GM12878 (cell line): ENCODE measurements at regions of chr10 and their contacts with region 1.

Region 1: DNA sequence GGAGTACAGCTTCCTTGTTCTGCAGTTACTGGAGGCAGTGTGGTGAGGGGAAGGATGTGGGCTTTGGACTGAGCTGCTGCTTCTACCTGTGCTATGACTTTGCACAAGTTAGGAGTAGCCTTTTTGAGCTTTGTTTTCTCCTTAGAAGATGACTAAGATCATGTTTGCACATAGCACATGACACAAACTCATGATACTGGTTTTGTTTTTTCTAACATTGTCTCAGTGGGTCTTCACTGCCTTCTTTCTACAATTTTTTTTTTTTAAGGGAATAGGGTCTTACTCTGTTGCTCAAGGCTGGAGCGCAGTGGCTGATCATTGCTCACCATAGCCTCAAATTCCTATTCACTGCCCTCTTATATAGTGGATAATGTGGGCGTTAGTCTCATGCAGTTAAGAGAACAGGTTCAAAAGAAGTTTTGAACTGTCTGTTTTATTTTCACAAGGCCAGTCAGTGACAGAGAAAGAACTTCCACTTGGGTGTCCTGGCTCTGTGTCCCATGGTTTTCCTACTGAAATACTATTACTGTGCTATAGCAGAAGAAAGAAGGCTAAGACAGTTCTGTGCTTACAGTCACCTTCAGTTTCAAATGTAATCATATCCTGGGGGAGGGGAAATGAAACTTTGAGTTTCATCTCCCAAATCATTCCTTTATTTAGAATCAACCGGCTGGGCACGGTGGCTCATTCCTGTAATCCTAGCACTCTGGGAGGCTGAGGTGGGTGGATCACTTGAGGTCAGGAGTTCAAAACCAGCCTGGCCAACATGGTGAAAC is 72.0 kb downstream of the KAT6B start:
- DNase-seq: peak; percentile 67
- ATAC-seq: peak; percentile 80
- H3K4me3 ChIP-seq: no peak overlapping the region; the same call in 1 of the 2 replicates
- H3K27ac ChIP-seq: peak overlapping the region; percentile 87
- H3K4me1 ChIP-seq: peaks cover 42% of the 10 kb centered on the region
- H3K27me3 ChIP-seq: no peaks in the 10 kb centered on the region
- CTCF ChIP-seq: no peak
- EP300 ChIP-seq: no peak; a peak in 2 of 4 replicates
- POLR2A ChIP-seq: peak; percentile 48
- RAD21 ChIP-seq: no peak

Region 2: GRCh38 chr10:74262856-74263255 is 635.5 kb before region 1 on chr10:
- CTCF ChIA-PET with region 1: no interaction called
- POLR2A ChIA-PET with region 1: no interaction called
- RAD21 ChIA-PET with region 1: no interaction called
- SMC1A ChIA-PET with region 1: interaction called, 3 read pairs
- in situ Hi-C with region 1: no loop called
- intact Hi-C with region 1: loop called (anchors 10 kb)
- DNase-seq: no peak
- ATAC-seq: no peak
- H3K4me3 ChIP-seq: no peak overlapping the region
- H3K27ac ChIP-seq: no peak overlapping the region
- H3K4me1 ChIP-seq: no peaks in the 10 kb centered on the region
- H3K27me3 ChIP-seq: no peaks in the 10 kb centered on the region
- CTCF ChIP-seq: no peak
- EP300 ChIP-seq: no peak
- POLR2A ChIP-seq: no peak
- RAD21 ChIP-seq: no peak

Region 3: DNA sequence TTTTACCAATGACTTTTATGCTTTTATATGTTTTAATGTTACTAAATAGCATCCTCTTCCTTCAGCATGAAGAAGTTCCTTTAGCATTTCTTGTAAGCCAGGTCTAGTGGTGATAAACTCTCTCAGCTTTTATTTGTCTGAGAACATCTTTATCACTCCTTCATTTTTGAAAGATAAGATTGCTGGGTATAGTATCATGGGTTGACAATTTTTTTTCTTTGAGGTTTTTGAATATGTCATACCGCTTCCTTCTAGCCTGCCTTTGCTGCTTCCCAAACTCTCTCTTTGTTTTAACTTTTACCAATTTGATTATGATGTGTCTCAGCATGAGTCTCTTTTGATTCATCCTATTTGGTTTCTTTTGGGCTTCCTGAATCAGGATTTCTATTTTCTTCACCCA is 180.2 kb before region 1 on chr10:
- CTCF ChIA-PET with region 1: no interaction called
- POLR2A ChIA-PET with region 1: no interaction called
- RAD21 ChIA-PET with region 1: no interaction called
- SMC1A ChIA-PET with region 1: no interaction called
- in situ Hi-C with region 1: no loop called
- intact Hi-C with region 1: no loop called
- DNase-seq: no peak
- ATAC-seq: no peak
- H3K4me3 ChIP-seq: no peak overlapping the region
- H3K27ac ChIP-seq: no peak overlapping the region
- H3K4me1 ChIP-seq: no peaks in the 10 kb centered on the region
- H3K27me3 ChIP-seq: no peaks in the 10 kb centered on the region
- CTCF ChIP-seq: no peak
- EP300 ChIP-seq: no peak
- POLR2A ChIP-seq: no peak
- RAD21 ChIP-seq: no peak

Region 4: DNA sequence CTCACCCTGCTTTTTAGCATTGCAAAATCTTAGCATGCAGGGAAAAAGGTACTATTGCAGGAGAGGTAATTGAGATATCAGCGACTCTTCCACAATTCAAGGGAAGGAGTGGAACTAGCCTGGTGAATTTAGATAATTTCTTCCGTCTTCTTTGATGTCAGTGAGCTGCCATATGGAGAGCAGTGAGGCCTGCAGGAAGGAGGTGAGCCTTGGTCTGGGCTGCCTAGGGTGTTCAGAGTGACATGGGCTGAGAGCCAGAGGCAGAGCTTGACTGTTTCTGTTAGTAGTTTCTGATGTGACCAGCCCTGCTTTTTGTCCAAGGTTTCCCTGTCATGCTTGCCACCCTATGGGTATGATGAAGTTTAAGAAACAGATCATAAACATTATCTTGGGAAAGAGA is 43.4 kb before region 1 on chr10:
- CTCF ChIA-PET with region 1: interaction called, 4 read pairs
- POLR2A ChIA-PET with region 1: interaction called, 6 read pairs
- RAD21 ChIA-PET with region 1: interaction called, 6 read pairs
- SMC1A ChIA-PET with region 1: interaction called, 13 read pairs
- in situ Hi-C with region 1: no loop called
- intact Hi-C with region 1: no loop called
- DNase-seq: no peak
- ATAC-seq: peak; percentile 83
- H3K4me3 ChIP-seq: peak overlapping the region; percentile 22; the same call in 1 of the 2 replicates
- H3K27ac ChIP-seq: peak overlapping the region; percentile 82
- H3K4me1 ChIP-seq: peaks cover 19% of the 10 kb centered on the region
- H3K27me3 ChIP-seq: no peaks in the 10 kb centered on the region
- CTCF ChIP-seq: no peak
- EP300 ChIP-seq: no peak
- POLR2A ChIP-seq: 0 out of 2 replicates have a peak, but pooled peaks have one; percentile 20
- RAD21 ChIP-seq: no peak

Region 5: DNA sequence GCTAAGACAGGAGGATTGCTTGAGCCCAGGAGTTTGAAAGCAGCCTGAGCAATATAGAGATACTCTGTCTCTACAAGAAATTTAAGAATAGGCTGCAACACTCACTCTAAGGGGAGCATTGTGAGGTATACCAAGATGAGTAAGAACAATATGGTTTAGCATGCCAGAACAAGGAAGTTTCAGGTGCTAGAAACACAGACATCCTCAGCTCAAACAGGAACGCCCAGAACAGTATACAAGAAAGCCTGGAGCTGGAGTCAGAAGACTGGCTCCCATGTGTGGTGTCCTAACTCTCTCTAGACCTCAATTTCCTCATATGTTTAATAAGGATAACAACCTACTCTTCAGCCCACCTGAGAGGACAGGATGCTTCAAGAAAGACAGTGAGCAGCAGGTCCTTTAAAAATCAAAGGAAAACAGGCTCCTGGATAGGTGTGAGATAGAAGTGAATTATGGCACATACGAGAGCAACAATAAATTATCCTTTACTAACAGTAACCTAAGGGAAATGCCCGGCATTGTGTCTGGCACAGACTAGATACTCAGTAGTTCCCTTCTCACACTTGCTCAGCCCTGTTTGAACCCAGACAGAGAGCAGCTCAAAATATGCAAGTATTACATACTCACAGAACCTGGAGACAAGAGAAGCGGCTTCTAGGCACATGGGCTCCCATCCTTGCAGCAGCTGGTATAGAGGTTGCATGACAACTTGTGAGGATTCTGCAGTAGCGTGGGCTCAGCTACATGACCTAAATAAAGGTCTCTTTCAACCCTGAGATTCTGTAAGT is 26.6 kb before region 1 on chr10:
- CTCF ChIA-PET with region 1: interaction called, 5 read pairs
- POLR2A ChIA-PET with region 1: interaction called, 7 read pairs
- RAD21 ChIA-PET with region 1: interaction called, 6 read pairs
- SMC1A ChIA-PET with region 1: interaction called, 31 read pairs
- in situ Hi-C with region 1: no loop called
- intact Hi-C with region 1: no loop called
- DNase-seq: peak; percentile 72
- ATAC-seq: peak; percentile 96
- H3K4me3 ChIP-seq: peak overlapping the region; percentile 37; the same call in 1 of the 2 replicates
- H3K27ac ChIP-seq: peak overlapping the region; percentile 61
- H3K4me1 ChIP-seq: peaks cover 32% of the 10 kb centered on the region
- H3K27me3 ChIP-seq: no peaks in the 10 kb centered on the region
- CTCF ChIP-seq: no peak
- EP300 ChIP-seq: peak in 1 of 2 experiments; percentile 56; a peak in 1 of 4 replicates
- POLR2A ChIP-seq: no peak
- RAD21 ChIP-seq: no peak; the same call in 1 of the 2 replicates

Region 6: GRCh38 chr10:74913377-74913979 is 15.1 kb after region 1 on chr10:
- CTCF ChIA-PET with region 1: interaction called, 34 read pairs
- POLR2A ChIA-PET with region 1: interaction called, 47 read pairs
- RAD21 ChIA-PET with region 1: interaction called, 38 read pairs
- SMC1A ChIA-PET with region 1: interaction called, 73 read pairs
- in situ Hi-C with region 1: no loop called
- intact Hi-C with region 1: no loop called
- DNase-seq: no peak
- ATAC-seq: peak; percentile 89
- H3K4me3 ChIP-seq: peak overlapping the region; percentile 15; the same call in 1 of the 2 replicates
- H3K27ac ChIP-seq: peak overlapping the region; percentile 62
- H3K4me1 ChIP-seq: peaks cover 5% of the 10 kb centered on the region
- H3K27me3 ChIP-seq: no peaks in the 10 kb centered on the region
- CTCF ChIP-seq: no peak
- EP300 ChIP-seq: no peak
- POLR2A ChIP-seq: no peak
- RAD21 ChIP-seq: 0 out of 2 replicates have a peak, but pooled peaks have one; percentile 1

Region 7: DNA sequence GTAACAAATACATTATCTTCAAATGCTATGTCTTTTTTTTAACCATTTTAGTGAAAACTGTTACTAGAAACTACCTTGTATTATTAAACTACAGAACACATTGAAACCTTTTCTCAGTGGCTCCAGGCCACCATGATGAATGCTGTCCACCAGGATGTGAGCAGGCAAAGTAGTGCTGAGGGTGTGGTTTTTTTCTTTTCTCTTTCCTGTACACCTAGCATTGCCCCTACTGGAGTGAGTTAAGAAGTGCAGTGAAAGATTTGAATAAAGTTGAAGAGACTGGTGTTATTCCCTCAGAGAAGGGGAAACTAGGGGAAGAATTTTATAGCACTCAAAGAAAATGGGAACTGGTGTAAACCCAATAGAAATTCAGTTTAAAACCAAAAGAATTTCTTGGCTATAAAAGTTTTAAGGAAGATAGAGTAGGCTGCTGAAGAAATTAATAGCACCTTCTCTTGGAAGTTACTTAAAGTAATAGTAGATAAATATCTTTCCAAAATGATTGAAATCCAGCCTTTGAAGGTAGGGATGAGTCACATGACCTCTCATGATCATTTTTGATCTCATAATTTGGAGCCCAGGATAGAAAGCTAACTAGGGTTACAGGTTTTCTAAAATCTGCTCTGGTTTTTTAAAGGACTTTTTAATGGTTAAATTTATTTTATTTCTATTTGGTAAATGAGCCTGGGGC is 93.2 kb after region 1 on chr10:
- CTCF ChIA-PET with region 1: interaction called, 6 read pairs
- POLR2A ChIA-PET with region 1: interaction called, 4 read pairs
- RAD21 ChIA-PET with region 1: no interaction called
- SMC1A ChIA-PET with region 1: interaction called, 3 read pairs
- in situ Hi-C with region 1: no loop called
- intact Hi-C with region 1: loop called (anchors 5 kb)
- DNase-seq: no peak
- ATAC-seq: peak; percentile 92
- H3K4me3 ChIP-seq: no peak overlapping the region
- H3K27ac ChIP-seq: no peak overlapping the region
- H3K4me1 ChIP-seq: peaks cover 7% of the 10 kb centered on the region
- H3K27me3 ChIP-seq: no peaks in the 10 kb centered on the region
- CTCF ChIP-seq: peak; percentile 34 to 54 (median 45)
- EP300 ChIP-seq: no peak
- POLR2A ChIP-seq: no peak
- RAD21 ChIP-seq: peak; percentile 51